ENCODE measurements at regions of chr3 and their contacts with region 1.

Region 1: GRCh38 chr3:24318668-24319287 is 175.9 kb downstream of the THRB start:
- DNase-seq: no peak
- H3K4me3 ChIP-seq: no peak overlapping the region
- H3K27ac ChIP-seq: no peak overlapping the region
- H3K4me1 ChIP-seq: no peaks in the 10 kb centered on the region
- H3K27me3 ChIP-seq: no peaks in the 10 kb centered on the region
- CTCF ChIP-seq: no peak
- POLR2A ChIP-seq: no peak

Region 2: DNA sequence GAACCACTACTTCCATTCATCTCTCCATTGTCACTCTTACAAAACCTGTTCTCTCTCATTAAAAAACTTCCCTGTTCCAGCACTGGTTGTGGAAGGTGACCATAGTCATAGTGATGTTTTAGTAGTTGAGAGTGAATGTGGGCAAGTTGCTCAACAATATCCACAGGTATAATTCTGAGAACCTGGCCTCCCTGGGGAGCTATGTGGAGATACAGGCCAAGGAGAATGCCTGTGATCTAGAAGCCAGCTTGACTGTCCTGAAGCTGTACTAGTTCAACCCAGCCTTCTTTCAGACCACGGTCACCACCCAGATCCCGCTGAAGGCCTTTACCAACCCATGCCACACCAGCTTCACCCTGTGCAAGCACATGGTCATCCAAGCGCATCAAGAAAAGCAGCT is 236.9 kb after region 1 on chr3:
- intact Hi-C with region 1: no loop called
- DNase-seq: no peak
- H3K4me3 ChIP-seq: no peak overlapping the region
- H3K27ac ChIP-seq: no peak overlapping the region
- H3K4me1 ChIP-seq: no peaks in the 10 kb centered on the region
- H3K27me3 ChIP-seq: no peaks in the 10 kb centered on the region
- CTCF ChIP-seq: no peak
- POLR2A ChIP-seq: no peak

Region 3: DNA sequence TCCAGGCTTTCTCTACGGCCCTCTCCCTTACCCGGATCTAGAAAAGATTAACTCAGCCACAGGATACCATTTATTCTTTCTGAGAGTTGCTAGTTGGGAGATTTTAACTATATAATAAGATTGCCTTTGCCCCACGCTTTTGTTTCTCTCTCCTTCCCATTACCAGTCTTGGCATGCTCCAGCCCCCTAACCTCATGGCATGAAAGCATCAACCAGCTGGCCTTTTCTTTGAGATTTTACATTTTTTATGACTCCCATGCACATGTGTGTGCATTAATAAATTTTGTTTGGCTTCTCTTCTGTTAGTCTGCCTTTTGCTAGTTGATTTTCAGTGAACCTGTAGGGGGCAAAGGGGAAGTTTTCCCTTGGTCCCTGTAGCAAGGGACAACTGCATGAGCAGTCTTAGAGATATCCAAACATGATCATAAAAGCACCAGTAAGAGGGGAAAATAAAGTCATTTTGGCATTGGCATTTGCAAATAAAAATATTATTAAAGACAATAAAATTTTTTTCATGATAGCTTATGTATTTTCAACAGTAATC is 1544.7 kb after region 1 on chr3:
- intact Hi-C with region 1: loop called (anchors 5 kb)
- DNase-seq: no peak
- H3K4me3 ChIP-seq: no peak overlapping the region
- H3K27ac ChIP-seq: no peak overlapping the region
- H3K4me1 ChIP-seq: no peaks in the 10 kb centered on the region
- H3K27me3 ChIP-seq: no peaks in the 10 kb centered on the region
- CTCF ChIP-seq: no peak
- POLR2A ChIP-seq: no peak

Measured in vagina (tissue), 2 donors.